ENCODE measurements at regions of chr16 and their contacts with region 1.

Region 1: GRCh38 chr16:31371619-31372484 is 16.9 kb downstream of the ITGAX start:
- DNase-seq: no peak
- ATAC-seq: peak in 1 of 2 experiments; percentile 51; a peak in 4 of 6 replicates
- H3K4me3 ChIP-seq: no peak overlapping the region
- H3K27ac ChIP-seq: no peak overlapping the region
- H3K4me1 ChIP-seq: no peaks in the 10 kb centered on the region
- CTCF ChIP-seq: no peak
- EP300 ChIP-seq: no peak
- POLR2A ChIP-seq: no peak
- RAD21 ChIP-seq: no peak

Region 2: DNA sequence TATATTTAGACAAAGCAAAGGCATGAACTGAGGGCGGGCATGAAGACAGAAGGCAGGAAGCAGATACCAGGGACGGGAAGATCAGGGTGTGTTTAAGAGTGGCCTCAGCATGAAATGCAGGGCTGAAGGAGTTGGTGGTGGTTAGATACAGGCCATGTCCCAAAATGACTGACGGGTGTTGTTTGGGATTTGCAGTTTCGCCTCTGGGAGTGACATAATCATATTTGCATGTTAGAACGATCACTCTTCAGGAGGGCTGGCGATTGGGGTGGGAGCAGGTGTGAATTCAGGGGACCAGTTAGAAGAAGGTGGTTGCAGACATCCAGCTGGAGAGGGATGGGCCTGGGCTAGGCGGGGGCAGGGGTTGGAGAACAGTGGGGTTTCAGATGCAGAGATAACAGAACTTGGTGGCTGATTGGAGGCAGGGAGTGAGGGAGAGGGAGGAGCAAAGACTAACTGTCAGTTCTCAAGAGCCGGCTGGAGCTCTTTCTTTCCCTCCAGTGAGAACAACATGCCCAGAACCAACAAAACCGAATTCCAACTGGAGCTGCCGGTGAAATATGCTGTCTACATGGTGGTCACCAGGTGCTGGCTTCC is 44.1 kb before region 1 on chr16:
- CTCF ChIA-PET with region 1: no interaction called
- POLR2A ChIA-PET with region 1: no interaction called
- DNase-seq: no peak
- ATAC-seq: no peak
- H3K4me3 ChIP-seq: no peak overlapping the region
- H3K27ac ChIP-seq: no peak overlapping the region
- H3K4me1 ChIP-seq: no peaks in the 10 kb centered on the region
- CTCF ChIP-seq: no peak
- EP300 ChIP-seq: no peak
- POLR2A ChIP-seq: no peak
- RAD21 ChIP-seq: no peak

Region 3: GRCh38 chr16:31382485-31383161 is 10.8 kb after region 1 on chr16:
- CTCF ChIA-PET with region 1: interaction called, 20 read pairs
- POLR2A ChIA-PET with region 1: no interaction called
- DNase-seq: peak; percentile 60 to 76
- ATAC-seq: peak; percentile 68 to 90; a peak in 5 of 6 replicates
- H3K4me3 ChIP-seq: no peak overlapping the region
- H3K27ac ChIP-seq: no peak overlapping the region
- H3K4me1 ChIP-seq: peaks cover 14% of the 10 kb centered on the region; the same call in 2 of the 3 replicates
- CTCF ChIP-seq: peak; percentile 70
- EP300 ChIP-seq: no peak
- POLR2A ChIP-seq: no peak
- RAD21 ChIP-seq: peak; percentile 61 to 68